ENCODE measurements at regions of chr1 and their contacts with region 1.

Region 1: DNA sequence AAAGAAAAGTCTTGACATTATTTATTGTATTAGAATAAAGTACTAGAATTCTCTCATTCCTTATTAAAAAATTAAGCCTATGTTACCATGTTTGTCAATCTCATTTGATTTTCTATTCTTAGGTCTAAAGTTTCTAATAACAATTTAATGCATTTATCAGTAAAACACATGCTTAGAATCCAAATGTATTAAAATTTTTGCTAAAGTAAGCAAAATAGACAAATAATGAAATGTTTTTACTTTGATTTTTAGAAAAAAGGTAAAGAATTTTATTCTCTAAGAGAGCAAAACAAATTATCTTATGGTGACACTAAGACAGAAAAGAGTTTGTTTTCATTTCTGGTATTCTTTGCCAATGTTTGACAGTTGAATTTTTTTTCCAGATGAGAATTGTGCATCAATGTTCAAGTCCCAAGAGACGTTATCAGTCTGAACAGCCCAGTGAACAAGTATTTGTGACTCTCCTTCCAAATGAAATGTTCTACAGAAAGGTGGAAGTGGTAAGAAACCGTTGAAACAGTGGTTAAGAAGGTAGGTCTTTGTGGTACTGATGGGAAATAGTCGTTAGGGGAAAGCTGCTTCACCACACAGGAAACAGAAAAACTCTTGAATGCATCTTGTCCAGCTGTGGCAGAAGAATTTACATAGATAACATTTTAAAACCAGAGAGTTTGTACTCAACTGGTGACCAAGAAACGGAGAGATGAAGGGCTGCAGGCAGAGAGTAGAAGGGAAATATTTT is 402.5 kb downstream of the PTPRC start:
- DNase-seq: peak; percentile 91
- H3K4me3 ChIP-seq: peak overlapping the region; percentile 38
- H3K27ac ChIP-seq: peak overlapping the region; percentile 92
- H3K4me1 ChIP-seq: peaks cover 43% of the 10 kb centered on the region
- CTCF ChIP-seq: no peak

Region 2: DNA sequence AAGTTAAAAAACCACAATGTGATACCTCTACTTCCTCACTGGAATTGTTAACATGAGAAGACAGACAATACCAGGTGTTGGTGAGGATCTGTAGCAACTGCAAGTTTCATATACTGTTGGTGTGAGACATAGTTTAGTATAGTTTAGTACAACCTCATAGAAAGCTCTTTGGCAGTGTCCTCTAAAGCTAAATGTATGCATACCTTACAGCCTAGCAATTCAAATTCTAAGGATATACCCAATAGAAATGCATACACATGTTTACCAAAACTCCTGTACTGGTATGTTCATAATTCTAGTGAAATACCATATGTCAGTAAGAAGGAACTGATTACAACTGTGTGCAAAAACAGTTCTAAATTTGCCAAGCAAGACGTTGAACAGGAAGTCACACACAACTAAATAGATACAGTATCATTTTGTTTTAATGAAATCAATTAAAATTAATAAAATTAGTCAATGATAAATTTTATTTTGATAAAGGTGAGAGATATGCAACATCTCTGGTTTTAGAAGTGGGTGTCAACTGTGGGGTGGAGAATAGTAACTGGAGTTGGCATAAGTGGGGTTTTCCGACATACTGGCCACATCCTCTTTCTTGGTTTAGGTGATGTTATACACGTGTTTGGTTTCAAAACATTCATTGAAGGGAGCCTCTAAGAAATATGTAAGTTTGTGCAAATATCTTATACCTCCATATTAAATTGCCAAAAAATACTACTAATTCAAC is 48.2 kb after region 1 on chr1:
- CTCF ChIA-PET with region 1: interaction called, 3 read pairs
- POLR2A ChIA-PET with region 1: interaction called, 4 read pairs
- intact Hi-C with region 1: loop called (anchors 2 kb)
- DNase-seq: peak; percentile 76
- H3K4me3 ChIP-seq: peak overlapping the region; percentile 24
- H3K27ac ChIP-seq: peak overlapping the region; percentile 71
- H3K4me1 ChIP-seq: peaks cover 33% of the 10 kb centered on the region
- CTCF ChIP-seq: no peak

Region 3: DNA sequence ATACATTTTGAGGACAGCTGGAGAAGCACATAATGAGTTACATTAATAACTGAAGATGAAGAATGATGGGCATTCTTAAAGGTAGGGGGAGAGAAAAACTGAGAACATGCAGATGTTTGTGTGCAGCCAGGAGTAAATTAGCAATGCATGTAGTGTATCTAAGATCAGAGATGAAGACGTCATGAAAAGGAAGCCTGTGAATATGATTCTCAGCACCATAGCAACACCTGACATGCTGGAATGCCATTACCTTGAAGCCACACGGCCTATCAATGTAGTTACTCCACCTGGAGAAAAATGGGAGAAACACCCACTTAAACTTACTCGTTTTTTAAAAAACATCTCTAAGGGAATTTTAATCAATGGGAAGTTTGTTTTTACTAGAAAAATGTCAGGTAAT is 204.6 kb after region 1 on chr1:
- CTCF ChIA-PET with region 1: no interaction called
- POLR2A ChIA-PET with region 1: no interaction called
- intact Hi-C with region 1: no loop called
- DNase-seq: no peak
- H3K4me3 ChIP-seq: no peak overlapping the region
- H3K27ac ChIP-seq: no peak overlapping the region
- H3K4me1 ChIP-seq: peaks cover 5% of the 10 kb centered on the region
- CTCF ChIP-seq: no peak